ENCODE measurements at regions of chr12 and their contacts with region 1.

Region 1: DNA sequence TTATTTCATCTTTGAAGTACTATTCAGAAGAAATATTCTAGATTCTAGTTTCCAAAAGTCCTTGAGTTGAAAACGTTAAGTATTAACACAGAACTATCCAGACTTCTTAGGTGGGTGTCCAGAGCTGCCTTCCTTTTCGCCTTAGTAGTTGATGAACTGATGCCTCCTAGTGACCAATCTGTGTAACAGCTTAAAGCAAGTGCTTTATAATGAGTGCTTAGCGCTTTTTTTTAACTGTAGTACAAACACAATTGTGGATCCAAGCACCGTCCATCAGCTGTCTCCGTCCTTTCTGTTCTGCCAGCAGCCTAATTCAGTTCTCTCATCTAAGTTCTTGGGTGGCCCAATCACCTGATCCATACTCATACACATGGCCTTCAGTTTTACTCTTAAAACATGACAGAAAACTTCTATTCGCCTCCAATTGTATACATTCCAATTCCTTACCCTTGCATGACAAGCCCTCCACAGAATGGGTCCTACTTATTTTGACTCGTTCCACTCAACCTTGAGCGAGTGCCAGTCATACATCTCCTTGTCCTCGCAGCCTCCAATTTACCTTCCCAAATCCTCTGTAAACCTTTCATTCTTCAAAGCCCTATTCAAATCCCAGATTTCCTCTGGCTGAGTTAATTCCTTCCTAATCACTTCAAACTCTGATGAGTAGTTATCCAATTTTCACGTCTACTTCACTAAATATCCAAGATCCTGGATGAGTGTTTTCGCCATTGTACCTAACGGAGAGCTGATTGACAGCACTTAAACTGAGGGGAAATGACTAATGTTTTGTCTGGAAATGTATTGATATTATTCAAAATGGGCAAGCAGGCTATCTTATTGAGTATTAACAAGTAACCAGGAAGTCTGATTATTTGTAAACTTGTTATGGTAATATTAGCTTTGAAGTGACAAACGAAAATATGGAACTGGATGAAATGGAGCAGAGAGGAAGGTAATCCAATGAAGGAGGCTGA is 5.8 kb upstream of the PHLDA1 start:
- DNase-seq: no peak
- ATAC-seq: peak; percentile 81

Region 2: GRCh38 chr12:75526655-75527511 is 510.5 kb before region 1 on chr12:
- intact Hi-C with region 1: loop called (anchors 5 kb)
- DNase-seq: no peak
- ATAC-seq: peak; percentile 49

Region 3: GRCh38 chr12:75650595-75651341 is 386.6 kb before region 1 on chr12:
- intact Hi-C with region 1: no loop called
- DNase-seq: no peak
- ATAC-seq: peak; percentile 39

Measured in Right ventricle myocardium superior (tissue), 1 donor.